T-cell (primary cell): ENCODE measurements at regions of chrX and their contacts with region 1.

Region 1: DNA sequence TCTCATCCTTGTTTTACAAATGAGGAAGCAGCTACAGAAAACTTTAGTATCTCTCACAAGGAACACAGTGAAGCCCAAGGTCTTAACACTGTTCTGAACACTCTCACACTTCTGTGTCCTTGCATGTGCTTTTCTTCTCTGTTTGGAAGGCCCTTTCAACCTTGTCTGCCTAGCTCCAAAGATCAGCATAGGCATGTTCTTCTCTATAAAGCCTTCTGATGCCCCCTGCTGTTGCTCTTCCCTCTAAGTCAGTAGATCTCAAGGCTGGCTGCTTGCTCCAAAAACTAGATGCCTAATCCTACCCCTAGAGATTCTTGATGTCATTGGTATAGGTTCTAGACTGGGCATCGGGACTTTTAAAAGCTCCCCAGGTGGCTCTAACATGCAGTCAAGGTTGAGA is 5.9 kb downstream of the APOO start:
- DNase-seq: peak in 29 of 35 experiments; percentile 1 to 62 (median 24)
- ATAC-seq: peak; percentile 75 to 88 (median 80)
- H3K4me3 ChIP-seq: no peak overlapping the region
- H3K4me3 Mint-ChIP-seq: no peak overlapping the region
- H3K27ac ChIP-seq: no peak overlapping the region
- H3K27ac Mint-ChIP-seq: no peak overlapping the region
- H3K4me1 ChIP-seq: peaks cover 0 to 5% of the 10 kb centered on the region in 2 experiments
- H3K4me1 Mint-ChIP-seq: peaks cover 0 to 11% (median 5%) of the 10 kb centered on the region in 3 donors
- H3K27me3 ChIP-seq: no peaks in the 10 kb centered on the region
- H3K27me3 Mint-ChIP-seq: no peaks in the 10 kb centered on the region

Region 2: GRCh38 chrX:21985332-21985777 is 1916.5 kb before region 1 on chrX:
- CTCF ChIA-PET with region 1: interaction called in 1 of 2 experiments, 10 read pairs
- POLR2A ChIA-PET with region 1: no interaction called
- DNase-seq: peak; percentile 15 to 80 (median 51)
- ATAC-seq: peak; percentile 93 to 99 (median 96)
- H3K4me3 ChIP-seq: no peak overlapping the region
- H3K4me3 Mint-ChIP-seq: no peak overlapping the region
- H3K27ac ChIP-seq: no peak overlapping the region
- H3K27ac Mint-ChIP-seq: no peak overlapping the region
- H3K4me1 ChIP-seq: peaks cover 0 to 2% of the 10 kb centered on the region in 2 experiments
- H3K4me1 Mint-ChIP-seq: peaks cover 0 to 4% (median 0%) of the 10 kb centered on the region in 3 donors
- H3K27me3 ChIP-seq: no peaks in the 10 kb centered on the region
- H3K27me3 Mint-ChIP-seq: peaks cover 0 to 6% of the 10 kb centered on the region in 2 donors

Region 3: GRCh38 chrX:23694606-23695005 is 207.2 kb before region 1 on chrX:
- CTCF ChIA-PET with region 1: interaction called, 10 to 13 read pairs
- POLR2A ChIA-PET with region 1: no interaction called
- DNase-seq: peak in 29 of 35 experiments; percentile 1 to 67 (median 25)
- ATAC-seq: peak; percentile 44 to 67 (median 53)
- H3K4me3 ChIP-seq: no peak overlapping the region
- H3K4me3 Mint-ChIP-seq: no peak overlapping the region
- H3K27ac ChIP-seq: no peak overlapping the region
- H3K27ac Mint-ChIP-seq: no peak overlapping the region
- H3K4me1 ChIP-seq: no peaks in the 10 kb centered on the region
- H3K4me1 Mint-ChIP-seq: no peaks in the 10 kb centered on the region
- H3K27me3 ChIP-seq: no peaks in the 10 kb centered on the region
- H3K27me3 Mint-ChIP-seq: no peaks in the 10 kb centered on the region

Region 4: DNA sequence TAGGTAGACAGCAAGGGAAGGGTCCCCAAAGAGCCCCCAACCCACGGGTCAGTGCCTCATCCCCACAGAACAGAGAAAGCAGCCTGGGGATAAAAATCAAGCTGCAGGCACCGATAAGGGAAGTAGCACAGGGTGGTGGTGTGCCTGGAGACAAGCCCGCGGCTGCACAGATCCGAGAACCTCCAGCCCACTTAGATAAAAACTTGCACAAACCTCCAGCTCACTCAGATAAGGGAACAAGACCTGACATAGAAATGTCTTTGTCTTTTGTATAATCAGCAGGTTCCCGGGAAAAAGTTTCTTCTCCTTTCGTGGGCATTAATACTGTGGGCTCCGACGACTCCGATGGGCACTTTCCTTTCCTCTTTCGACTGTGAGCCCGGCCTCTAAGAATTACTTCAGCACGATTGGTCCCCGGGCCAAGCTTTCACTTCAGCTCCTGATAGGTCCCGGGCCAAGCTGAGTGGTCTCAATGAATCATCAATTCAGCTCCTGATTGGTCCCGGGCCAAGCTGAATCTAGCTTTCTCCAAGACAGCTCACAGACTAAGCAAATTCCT is 202.1 kb before region 1 on chrX:
- CTCF ChIA-PET with region 1: interaction called, 10 to 13 read pairs
- POLR2A ChIA-PET with region 1: no interaction called
- DNase-seq: peak in 11 of 35 experiments; percentile 0 to 39 (median 7)
- ATAC-seq: peak in 2 of 4 experiments; percentile 69 to 87
- H3K4me3 ChIP-seq: no peak overlapping the region
- H3K4me3 Mint-ChIP-seq: peak overlapping the region; percentile 52 to 76 (median 59)
- H3K27ac ChIP-seq: no peak overlapping the region
- H3K27ac Mint-ChIP-seq: peak overlapping the region in 1 of 2 donors; percentile 76
- H3K4me1 ChIP-seq: no peaks in the 10 kb centered on the region
- H3K4me1 Mint-ChIP-seq: peaks cover 0 to 4% (median 3%) of the 10 kb centered on the region in 3 donors
- H3K27me3 ChIP-seq: no peaks in the 10 kb centered on the region
- H3K27me3 Mint-ChIP-seq: no peaks in the 10 kb centered on the region

Region 5: DNA sequence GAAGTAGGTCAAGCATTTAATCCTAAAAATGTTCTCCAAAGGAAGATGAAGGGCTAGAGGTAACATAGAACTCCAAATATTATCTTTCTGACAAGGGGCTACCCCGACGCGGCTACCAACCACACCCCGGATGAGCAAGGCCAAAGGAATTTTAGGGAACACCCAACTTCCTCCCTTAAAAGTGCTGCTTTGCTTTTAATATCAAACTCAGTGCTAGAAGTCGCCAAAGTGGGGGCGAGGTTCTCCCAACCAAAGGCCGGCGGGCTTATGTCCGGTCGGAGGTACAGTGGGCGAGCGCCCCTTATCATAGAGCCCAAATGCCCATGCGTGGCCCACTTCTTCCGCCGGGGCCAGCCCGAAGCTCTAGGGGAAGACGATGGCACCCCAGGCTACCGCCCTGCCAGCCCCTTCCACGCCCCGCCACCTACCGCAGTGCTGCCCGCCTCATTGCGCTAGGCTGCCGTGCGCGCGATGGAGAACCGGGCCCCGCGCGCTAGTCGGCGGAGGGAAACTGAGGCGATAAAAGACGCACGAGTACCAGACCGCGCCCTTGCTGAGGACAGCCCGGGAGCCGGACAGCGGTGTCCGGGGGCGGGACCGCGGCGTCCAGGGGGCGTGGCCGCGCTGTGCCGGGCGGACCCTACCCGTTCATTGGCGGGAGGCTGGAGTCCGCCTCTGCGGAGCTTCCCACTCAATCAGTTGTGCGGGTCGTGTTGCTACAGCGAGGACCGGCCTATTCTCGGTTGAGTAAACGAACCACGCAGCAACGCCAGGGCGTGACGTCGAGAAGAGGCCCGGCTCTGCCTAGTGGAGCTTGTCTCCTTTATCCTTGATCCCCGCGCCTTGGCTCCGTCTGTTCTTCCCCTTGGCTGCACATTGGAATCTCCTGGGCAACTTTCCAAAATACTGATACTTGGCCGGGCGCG is 158.8 kb before region 1 on chrX and contains the start of gene ACOT9:
- CTCF ChIA-PET with region 1: interaction called, 3 to 10 read pairs
- POLR2A ChIA-PET with region 1: no interaction called
- DNase-seq: peak; percentile 31 to 76 (median 61)
- ATAC-seq: peak; percentile 88 to 92 (median 90)
- H3K4me3 ChIP-seq: peak within 1 kb of the TSS; percentile 70 to 73
- H3K4me3 Mint-ChIP-seq: peak within 1 kb of the TSS; percentile 66 to 88 (median 77)
- H3K27ac ChIP-seq: peak within 1 kb of the TSS; percentile 66
- H3K27ac Mint-ChIP-seq: peak within 1 kb of the TSS; percentile 71 to 79
- H3K4me1 ChIP-seq: peaks cover 0 to 31% of the 10 kb centered on the region in 2 experiments
- H3K4me1 Mint-ChIP-seq: peaks cover 13 to 37% (median 23%) of the 10 kb centered on the region in 3 donors
- H3K27me3 ChIP-seq: no peaks in the 10 kb centered on the region
- H3K27me3 Mint-ChIP-seq: no peaks in the 10 kb centered on the region
- total RNA-seq, gene ACOT9: 15.0 to 22.1 (median 19.2) TPM